Activated CD8-positive, alpha-beta T cell treated with anti-CD3 and anti-CD28 coated beads for 36 hours (primary cell): ENCODE measurements at regions of chr21 and their contacts with region 1.

Region 1: GRCh38 chr21:25421327-25422028 is 185.8 kb downstream of the MRPL39 start:
- DNase-seq: peak; percentile 84
- ATAC-seq: peak; percentile 94
- H3K4me3 Mint-ChIP-seq: peak overlapping the region; percentile 55
- H3K27ac Mint-ChIP-seq: peak overlapping the region; percentile 89
- H3K4me1 Mint-ChIP-seq: peaks cover 59% of the 10 kb centered on the region
- H3K27me3 Mint-ChIP-seq: no peaks in the 10 kb centered on the region
- CTCF ChIP-seq: peak; percentile 82

Region 2: DNA sequence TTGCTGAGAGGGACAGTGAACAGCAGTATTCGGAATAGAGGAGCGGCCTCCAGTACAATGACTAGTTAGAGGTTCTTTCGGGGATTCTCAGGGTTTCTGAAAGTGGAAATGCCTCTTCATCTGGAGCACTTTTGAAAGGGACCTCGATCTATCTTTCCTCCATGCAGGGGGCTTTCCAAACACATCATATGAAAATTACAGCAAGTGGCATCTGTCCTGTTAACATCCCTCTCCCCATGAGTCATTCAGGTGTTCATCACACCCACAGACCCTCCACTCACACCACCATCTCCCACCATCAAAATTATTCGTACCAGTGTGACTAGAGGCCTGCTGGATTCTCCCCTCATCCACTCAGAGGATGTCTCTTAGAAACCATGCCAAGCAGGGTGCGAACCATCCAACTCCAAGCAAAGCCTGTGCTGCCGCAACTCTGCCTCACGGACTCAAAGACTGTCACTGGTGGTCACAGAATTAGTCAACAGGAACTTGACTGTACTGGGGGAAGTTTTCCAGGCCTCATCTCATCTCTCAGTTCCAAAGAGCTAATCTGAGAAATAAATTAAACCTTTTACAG is 25.3 kb before region 1 on chr21:
- CTCF ChIA-PET with region 1: interaction called, 10 read pairs
- POLR2A ChIA-PET with region 1: interaction called, 4 read pairs
- intact Hi-C with region 1: no loop called
- DNase-seq: peak; percentile 91
- ATAC-seq: peak; percentile 96
- H3K4me3 Mint-ChIP-seq: peak overlapping the region; percentile 25
- H3K27ac Mint-ChIP-seq: peak overlapping the region; percentile 84
- H3K4me1 Mint-ChIP-seq: peaks cover 27% of the 10 kb centered on the region
- H3K27me3 Mint-ChIP-seq: no peaks in the 10 kb centered on the region
- CTCF ChIP-seq: no peak

Region 3: DNA sequence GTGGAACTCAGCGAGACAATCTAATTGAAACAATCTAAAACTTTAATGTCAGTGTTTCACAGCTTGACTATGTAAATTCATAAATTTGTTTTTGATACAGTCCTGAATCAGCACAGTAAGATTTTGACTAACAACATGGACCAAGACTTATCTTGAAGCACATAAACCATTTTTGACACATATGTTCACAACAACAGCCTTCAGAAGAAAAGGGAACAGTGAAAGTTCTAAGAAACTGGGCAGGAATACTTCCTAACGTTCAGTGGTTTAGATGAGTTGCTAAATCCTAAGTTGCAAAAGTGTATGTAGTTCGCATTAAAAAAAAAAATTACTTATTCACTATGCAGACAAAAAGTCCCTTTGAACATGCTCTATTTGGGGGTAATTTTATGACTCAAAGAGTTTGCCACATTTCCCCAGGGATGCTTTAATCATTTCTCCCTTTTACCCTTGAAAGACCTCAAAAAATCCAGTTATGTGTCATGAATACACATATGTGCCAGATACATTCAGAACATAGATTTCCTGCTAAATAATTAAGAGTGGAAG is 65.6 kb after region 1 on chr21:
- CTCF ChIA-PET with region 1: interaction called, 17 read pairs
- POLR2A ChIA-PET with region 1: interaction called, 22 read pairs
- intact Hi-C with region 1: no loop called
- DNase-seq: no peak
- ATAC-seq: peak; percentile 75
- H3K4me3 Mint-ChIP-seq: peak overlapping the region; percentile 54
- H3K27ac Mint-ChIP-seq: peak overlapping the region; percentile 89
- H3K4me1 Mint-ChIP-seq: peaks cover 77% of the 10 kb centered on the region
- H3K27me3 Mint-ChIP-seq: no peaks in the 10 kb centered on the region
- CTCF ChIP-seq: no peak

Region 4: GRCh38 chr21:25507522-25507921 is 86.0 kb after region 1 on chr21:
- CTCF ChIA-PET with region 1: interaction called, 20 read pairs
- POLR2A ChIA-PET with region 1: interaction called, 5 read pairs
- intact Hi-C with region 1: loop called (anchors 5 kb)
- DNase-seq: peak; percentile 46
- ATAC-seq: peak; percentile 43
- H3K4me3 Mint-ChIP-seq: peak overlapping the region; percentile 50
- H3K27ac Mint-ChIP-seq: peak overlapping the region; percentile 55
- H3K4me1 Mint-ChIP-seq: peaks cover 63% of the 10 kb centered on the region
- H3K27me3 Mint-ChIP-seq: no peaks in the 10 kb centered on the region
- CTCF ChIP-seq: peak; percentile 28

Region 5: GRCh38 chr21:25568246-25568645 is 146.8 kb after region 1 on chr21:
- CTCF ChIA-PET with region 1: interaction called, 14 read pairs
- POLR2A ChIA-PET with region 1: interaction called, 275 read pairs
- intact Hi-C with region 1: loop called (anchors 2 kb)
- DNase-seq: peak; percentile 42
- ATAC-seq: no peak
- H3K4me3 Mint-ChIP-seq: peak overlapping the region; percentile 83
- H3K27ac Mint-ChIP-seq: peak overlapping the region; percentile 98
- H3K4me1 Mint-ChIP-seq: peaks cover 39% of the 10 kb centered on the region
- H3K27me3 Mint-ChIP-seq: no peaks in the 10 kb centered on the region
- CTCF ChIP-seq: no peak

Region 6: DNA sequence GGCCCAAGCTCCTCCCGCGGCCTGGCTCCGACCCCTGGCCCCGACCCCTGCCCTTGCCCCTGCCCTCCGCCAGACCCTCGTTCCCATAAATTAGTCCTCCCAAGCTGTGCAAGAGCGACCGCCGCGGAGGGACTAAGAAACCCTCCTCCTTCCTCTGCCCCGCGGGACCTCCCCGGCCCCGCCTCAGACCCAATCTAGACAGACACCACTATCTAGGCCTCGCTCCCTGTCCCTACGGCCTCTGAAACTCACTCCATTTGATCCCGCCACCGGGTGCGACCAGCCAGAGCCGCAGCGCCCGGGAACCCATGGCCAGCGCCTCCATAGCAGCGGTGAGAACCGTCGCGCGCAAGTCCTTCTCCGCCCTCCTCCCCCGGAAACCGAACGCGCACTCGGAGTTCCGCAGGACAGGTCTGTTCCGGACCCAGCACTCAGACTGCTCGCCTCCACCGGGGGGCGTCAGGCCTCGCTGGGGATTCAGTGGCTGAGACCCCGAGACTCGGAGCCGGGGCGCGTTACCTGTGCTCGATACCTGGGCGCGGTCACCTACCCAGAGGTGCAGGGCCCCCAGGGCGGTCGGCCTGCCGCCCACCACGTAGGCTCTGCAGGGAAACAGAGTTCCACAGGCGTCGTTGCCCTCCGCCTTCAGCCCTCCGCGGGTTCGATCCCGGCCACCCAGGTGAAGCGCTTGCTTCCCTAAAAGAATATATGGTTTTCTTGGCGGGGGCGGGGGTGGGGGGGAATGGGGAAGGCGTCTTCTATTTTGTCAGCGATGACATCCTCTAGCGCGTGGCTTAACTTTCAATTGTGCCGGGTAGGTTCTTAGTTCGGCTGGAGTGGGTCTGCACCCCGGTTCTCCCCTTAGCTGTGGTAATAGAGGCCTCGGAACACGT is 185.9 kb after region 1 on chr21 and contains the start of gene MRPL39:
- CTCF ChIA-PET with region 1: interaction called, 10 read pairs
- POLR2A ChIA-PET with region 1: no interaction called
- intact Hi-C with region 1: no loop called
- DNase-seq: peak; percentile 92
- ATAC-seq: peak; percentile 94
- H3K4me3 Mint-ChIP-seq: peak within 1 kb of the TSS; percentile 100
- H3K27ac Mint-ChIP-seq: peak within 1 kb of the TSS; percentile 99
- H3K4me1 Mint-ChIP-seq: peaks cover 33% of the 10 kb centered on the region
- H3K27me3 Mint-ChIP-seq: no peaks in the 10 kb centered on the region
- CTCF ChIP-seq: peak; percentile 50
- total RNA-seq, gene MRPL39: 67.1 to 71.0 TPM